ENCODE measurements at regions of chr17 and their contacts with region 1.

Region 1: GRCh38 chr17:46044286-46044928 is 45.4 kb downstream of the STH start:
- DNase-seq: no peak
- ATAC-seq: peak; percentile 76
- H3K4me3 ChIP-seq: no peak overlapping the region
- H3K27ac ChIP-seq: no peak overlapping the region
- H3K4me1 ChIP-seq: no peaks in the 10 kb centered on the region
- H3K27me3 ChIP-seq: no peaks in the 10 kb centered on the region
- CTCF ChIP-seq: peak; percentile 67 to 80 (median 76)
- EP300 ChIP-seq: no peak
- POLR2A ChIP-seq: no peak
- RAD21 ChIP-seq: peak; percentile 75

Region 2: GRCh38 chr17:45451141-45451540 is 593.3 kb before region 1 on chr17:
- CTCF ChIA-PET with region 1: no interaction called
- POLR2A ChIA-PET with region 1: no interaction called
- RAD21 ChIA-PET with region 1: no interaction called
- SMC1A ChIA-PET with region 1: no interaction called
- in situ Hi-C with region 1: no loop called
- intact Hi-C with region 1: no loop called
- DNase-seq: no peak
- ATAC-seq: peak; percentile 59; the same call in 2 of the 3 replicates
- H3K4me3 ChIP-seq: no peak overlapping the region
- H3K27ac ChIP-seq: no peak overlapping the region
- H3K4me1 ChIP-seq: 0 out of 2 replicates have a peak, but pooled peaks cover 5% of the 10 kb centered on the region
- H3K27me3 ChIP-seq: no peaks in the 10 kb centered on the region
- CTCF ChIP-seq: peak in 1 of 3 experiments; percentile 14; a peak in 2 of 6 replicates
- EP300 ChIP-seq: no peak
- POLR2A ChIP-seq: no peak
- RAD21 ChIP-seq: no peak

Region 3: GRCh38 chr17:46009681-46010596 is 34.5 kb before region 1 on chr17:
- CTCF ChIA-PET with region 1: interaction called, 3 read pairs
- POLR2A ChIA-PET with region 1: no interaction called
- RAD21 ChIA-PET with region 1: no interaction called
- SMC1A ChIA-PET with region 1: interaction called, 12 read pairs
- in situ Hi-C with region 1: no loop called
- intact Hi-C with region 1: loop called (anchors 5 kb)
- DNase-seq: no peak
- ATAC-seq: no peak
- H3K4me3 ChIP-seq: no peak overlapping the region
- H3K27ac ChIP-seq: no peak overlapping the region
- H3K4me1 ChIP-seq: no peaks in the 10 kb centered on the region
- H3K27me3 ChIP-seq: no peaks in the 10 kb centered on the region
- CTCF ChIP-seq: no peak
- EP300 ChIP-seq: no peak
- POLR2A ChIP-seq: no peak
- RAD21 ChIP-seq: no peak

Region 4: GRCh38 chr17:46056800-46057304 is 12.4 kb after region 1 on chr17:
- CTCF ChIA-PET with region 1: interaction called, 19 read pairs
- POLR2A ChIA-PET with region 1: interaction called, 6 read pairs
- RAD21 ChIA-PET with region 1: interaction called, 5 read pairs
- SMC1A ChIA-PET with region 1: interaction called, 7 read pairs
- in situ Hi-C with region 1: no loop called
- intact Hi-C with region 1: no loop called
- DNase-seq: no peak
- ATAC-seq: no peak
- H3K4me3 ChIP-seq: no peak overlapping the region
- H3K27ac ChIP-seq: no peak overlapping the region
- H3K4me1 ChIP-seq: peaks cover 6% of the 10 kb centered on the region
- H3K27me3 ChIP-seq: no peaks in the 10 kb centered on the region
- CTCF ChIP-seq: no peak
- EP300 ChIP-seq: no peak
- POLR2A ChIP-seq: no peak
- RAD21 ChIP-seq: no peak

Region 5: GRCh38 chr17:46179375-46179999 is 135.1 kb after region 1 on chr17:
- CTCF ChIA-PET with region 1: interaction called, 120 read pairs
- POLR2A ChIA-PET with region 1: no interaction called
- RAD21 ChIA-PET with region 1: interaction called, 6 read pairs
- SMC1A ChIA-PET with region 1: interaction called, 88 read pairs
- in situ Hi-C with region 1: no loop called
- intact Hi-C with region 1: no loop called
- DNase-seq: peak; percentile 73
- ATAC-seq: peak; percentile 79
- H3K4me3 ChIP-seq: peak overlapping the region; percentile 17; the same call in 1 of the 2 replicates
- H3K27ac ChIP-seq: peak overlapping the region; percentile 29
- H3K4me1 ChIP-seq: peaks cover 50% of the 10 kb centered on the region
- H3K27me3 ChIP-seq: no peaks in the 10 kb centered on the region
- CTCF ChIP-seq: no peak
- EP300 ChIP-seq: peak in 1 of 2 experiments; percentile 45; a peak in 1 of 4 replicates
- POLR2A ChIP-seq: no peak
- RAD21 ChIP-seq: no peak

Region 6: GRCh38 chr17:46193626-46194392 is 149.4 kb after region 1 on chr17:
- CTCF ChIA-PET with region 1: interaction called, 21 read pairs
- POLR2A ChIA-PET with region 1: no interaction called
- RAD21 ChIA-PET with region 1: interaction called, 4 read pairs
- SMC1A ChIA-PET with region 1: interaction called, 11 read pairs
- in situ Hi-C with region 1: loop called (anchors 5 kb)
- intact Hi-C with region 1: no loop called
- DNase-seq: peak; percentile 88
- ATAC-seq: peak; percentile 90
- H3K4me3 ChIP-seq: peak overlapping the region; percentile 87
- H3K27ac ChIP-seq: peak overlapping the region; percentile 98
- H3K4me1 ChIP-seq: peaks cover 32% of the 10 kb centered on the region
- H3K27me3 ChIP-seq: no peaks in the 10 kb centered on the region
- CTCF ChIP-seq: peak in 2 of 3 experiments; percentile 13 to 26; a peak in 3 of 6 replicates
- EP300 ChIP-seq: peak in 1 of 2 experiments; percentile 7; a peak in 1 of 4 replicates
- POLR2A ChIP-seq: peak; percentile 85
- RAD21 ChIP-seq: no peak